Calu3 (cell line): ENCODE measurements at regions of chr1 and their contacts with region 1.

Region 1: GRCh38 chr1:205733438-205734169 is 16.4 kb downstream of the NUCKS1 start:
- DNase-seq: no peak
- H3K4me3 Mint-ChIP-seq: no peak overlapping the region
- H3K27ac Mint-ChIP-seq: no peak overlapping the region
- H3K4me1 Mint-ChIP-seq: peaks cover 20% of the 10 kb centered on the region
- H3K27me3 Mint-ChIP-seq: no peaks in the 10 kb centered on the region
- CTCF ChIP-seq: no peak

Region 2: GRCh38 chr1:205554026-205554811 is 179.4 kb before region 1 on chr1:
- CTCF ChIA-PET with region 1: no interaction called
- intact Hi-C with region 1: no loop called
- DNase-seq: no peak
- H3K4me3 Mint-ChIP-seq: no peak overlapping the region
- H3K27ac Mint-ChIP-seq: no peak overlapping the region
- H3K4me1 Mint-ChIP-seq: no peaks in the 10 kb centered on the region
- H3K27me3 Mint-ChIP-seq: peaks cover 23% of the 10 kb centered on the region
- CTCF ChIP-seq: no peak

Region 3: GRCh38 chr1:205610036-205610435 is 123.6 kb before region 1 on chr1:
- CTCF ChIA-PET with region 1: no interaction called
- intact Hi-C with region 1: no loop called
- DNase-seq: no peak
- H3K4me3 Mint-ChIP-seq: no peak overlapping the region
- H3K27ac Mint-ChIP-seq: peak overlapping the region; percentile 97
- H3K4me1 Mint-ChIP-seq: peaks cover 56% of the 10 kb centered on the region
- H3K27me3 Mint-ChIP-seq: no peaks in the 10 kb centered on the region
- CTCF ChIP-seq: no peak

Region 4: DNA sequence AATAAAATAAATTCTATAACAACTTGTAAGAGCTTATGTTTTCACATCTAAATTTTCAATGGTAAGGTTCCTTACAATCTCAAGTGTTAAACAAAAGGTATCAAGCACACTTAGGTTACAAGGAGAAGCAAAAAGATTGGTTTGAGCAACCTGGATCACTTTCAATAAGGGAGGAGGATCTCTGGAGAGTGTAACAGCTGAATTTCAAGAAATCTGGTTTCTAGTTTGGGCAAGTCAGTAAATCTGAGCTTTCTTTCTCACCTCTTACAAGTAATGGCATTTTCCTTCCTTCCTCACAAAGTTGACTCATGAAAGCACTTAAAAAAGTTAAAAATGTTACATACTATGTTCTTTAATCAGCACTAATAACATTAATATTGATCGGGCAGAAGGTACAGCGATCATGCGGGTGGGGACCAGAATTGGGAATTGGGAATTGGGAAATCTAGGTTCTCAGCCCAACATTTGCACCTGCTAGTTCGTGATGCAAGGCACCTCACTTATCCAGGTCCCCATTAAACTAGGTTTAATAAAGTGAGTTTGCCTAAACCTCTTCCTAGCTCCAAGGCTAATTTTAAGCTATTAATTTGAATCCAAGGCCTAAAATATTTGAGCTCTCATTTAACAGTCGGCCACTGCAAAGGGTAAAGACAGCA is 13.3 kb after region 1 on chr1:
- CTCF ChIA-PET with region 1: no interaction called
- intact Hi-C with region 1: loop called (anchors 2 kb)
- DNase-seq: no peak
- H3K4me3 Mint-ChIP-seq: peak overlapping the region; percentile 60
- H3K27ac Mint-ChIP-seq: peak overlapping the region; percentile 73
- H3K4me1 Mint-ChIP-seq: peaks cover 31% of the 10 kb centered on the region
- H3K27me3 Mint-ChIP-seq: no peaks in the 10 kb centered on the region
- CTCF ChIP-seq: no peak

Region 5: GRCh38 chr1:205805082-205805712 is 71.6 kb after region 1 on chr1:
- CTCF ChIA-PET with region 1: no interaction called
- intact Hi-C with region 1: no loop called
- DNase-seq: peak; percentile 25
- H3K4me3 Mint-ChIP-seq: no peak overlapping the region
- H3K27ac Mint-ChIP-seq: no peak overlapping the region
- H3K4me1 Mint-ChIP-seq: peaks cover 16% of the 10 kb centered on the region
- H3K27me3 Mint-ChIP-seq: no peaks in the 10 kb centered on the region
- CTCF ChIP-seq: no peak